Activated T-helper 1 cell treated with anti-CD3 and anti-CD28 coated beads, Interleukin-12 subunit alpha, Interleukin-12 subunit beta, Interleukin-2, Interleukin-4 antibody, amounts not matched to agents 30 ng/mL and 10 ng/mL and 1 ng/mL, durations not matched to agents 14 hours and 24 hours and 36 hours (primary cell): ENCODE measurements at regions of chr12 and their contacts with region 1.

Region 1: GRCh38 chr12:27779920-27780611 is at the starts of genes KLHL42 and MANSC4:
- DNase-seq: peak; percentile 62
- H3K4me3 Mint-ChIP-seq: peak within 1 kb of the TSS; percentile 84
- H3K27ac Mint-ChIP-seq: peak within 1 kb of the TSS; percentile 75
- H3K4me1 Mint-ChIP-seq: peaks cover 30% of the 10 kb centered on the region
- H3K27me3 Mint-ChIP-seq: peaks cover 19% of the 10 kb centered on the region
- total RNA-seq, gene KLHL42: 19.5 and 21.7 TPM in 2 replicates
- total RNA-seq, gene MANSC4: not detected in 2 replicates

Region 2: GRCh38 chr12:27801630-27802029 is 21.6 kb after region 1 on chr12:
- intact Hi-C with region 1: loop called (anchors 1 kb)
- DNase-seq: no peak
- H3K4me3 Mint-ChIP-seq: no peak overlapping the region
- H3K27ac Mint-ChIP-seq: peak overlapping the region; percentile 79
- H3K4me1 Mint-ChIP-seq: peaks cover 43% of the 10 kb centered on the region
- H3K27me3 Mint-ChIP-seq: peaks cover 8% of the 10 kb centered on the region

Region 3: GRCh38 chr12:27838543-27839185 is 58.6 kb after region 1 on chr12:
- intact Hi-C with region 1: no loop called
- DNase-seq: no peak
- H3K4me3 Mint-ChIP-seq: no peak overlapping the region
- H3K27ac Mint-ChIP-seq: no peak overlapping the region
- H3K4me1 Mint-ChIP-seq: no peaks in the 10 kb centered on the region
- H3K27me3 Mint-ChIP-seq: peaks cover 4% of the 10 kb centered on the region